Activated T-helper 1 cell treated with anti-CD3 and anti-CD28 coated beads, Interleukin-12 subunit alpha, Interleukin-12 subunit beta, Interleukin-2, Interleukin-4 antibody, amounts not matched to agents 30 ng/mL and 10 ng/mL and 1 ng/mL, durations not matched to agents 14 hours and 24 hours and 36 hours (primary cell): ENCODE measurements at regions of chrX and their contacts with region 1.

Region 1: GRCh38 chrX:52261463-52262194 is 76.9 kb downstream of the MAGED4 start:
- DNase-seq: peak; percentile 78
- H3K4me3 Mint-ChIP-seq: peak overlapping the region; percentile 88
- H3K27ac Mint-ChIP-seq: peak overlapping the region; percentile 99
- H3K4me1 Mint-ChIP-seq: peaks cover 17% of the 10 kb centered on the region
- H3K27me3 Mint-ChIP-seq: peaks cover 3% of the 10 kb centered on the region

Region 2: GRCh38 chrX:51487960-51488267 is 773.7 kb before region 1 on chrX:
- intact Hi-C with region 1: loop called (anchors 5 kb)
- DNase-seq: no peak
- H3K4me3 Mint-ChIP-seq: no peak overlapping the region
- H3K27ac Mint-ChIP-seq: no peak overlapping the region
- H3K4me1 Mint-ChIP-seq: no peaks in the 10 kb centered on the region
- H3K27me3 Mint-ChIP-seq: peaks cover 4% of the 10 kb centered on the region

Region 3: GRCh38 chrX:51614353-51615012 is 647.1 kb before region 1 on chrX:
- intact Hi-C with region 1: loop called (anchors 2 kb)
- DNase-seq: no peak
- H3K4me3 Mint-ChIP-seq: no peak overlapping the region
- H3K27ac Mint-ChIP-seq: no peak overlapping the region
- H3K4me1 Mint-ChIP-seq: no peaks in the 10 kb centered on the region
- H3K27me3 Mint-ChIP-seq: peaks cover 21% of the 10 kb centered on the region

Region 4: DNA sequence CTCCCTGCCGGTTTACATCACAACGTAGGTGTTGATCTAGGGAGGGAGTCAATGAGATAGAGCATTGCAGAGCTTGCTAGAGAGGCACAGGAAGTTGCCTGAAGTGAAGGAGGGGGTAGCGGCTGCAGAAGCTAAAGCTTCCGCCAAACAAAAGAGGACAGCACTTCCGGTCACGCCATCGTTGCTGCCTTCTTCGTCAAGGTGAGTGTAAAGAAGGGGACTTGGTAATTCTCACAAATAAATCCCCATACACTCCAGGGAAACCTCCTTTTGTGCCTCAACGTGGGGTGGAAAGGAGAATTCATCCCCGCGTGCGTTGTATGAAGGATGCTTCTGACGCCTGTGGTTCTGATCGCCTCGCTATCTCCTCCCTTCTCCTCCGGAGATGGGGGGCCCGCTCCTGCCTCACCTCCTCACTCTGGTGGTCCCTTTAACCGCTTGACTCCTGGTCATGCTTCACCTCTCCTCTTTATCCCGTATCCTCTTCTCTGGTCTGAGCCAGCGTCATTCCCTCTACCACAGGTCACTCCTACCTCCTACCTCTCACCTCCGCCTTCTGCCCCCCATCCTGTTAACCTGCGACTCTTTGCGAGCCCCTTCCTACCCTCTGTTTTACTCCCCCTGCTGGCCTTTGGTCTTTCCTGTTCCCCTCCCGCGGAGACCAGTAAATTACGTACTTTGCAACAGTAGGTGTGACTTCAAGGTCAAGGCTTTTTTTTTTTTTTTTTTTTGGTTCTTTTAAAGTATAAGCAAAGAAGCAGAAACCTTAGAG is 458.5 kb before region 1 on chrX:
- intact Hi-C with region 1: loop called (anchors 1 kb)
- DNase-seq: peak; percentile 22
- H3K4me3 Mint-ChIP-seq: peak overlapping the region; percentile 92
- H3K27ac Mint-ChIP-seq: peak overlapping the region; percentile 93
- H3K4me1 Mint-ChIP-seq: peaks cover 4% of the 10 kb centered on the region
- H3K27me3 Mint-ChIP-seq: peaks cover 2% of the 10 kb centered on the region

Region 5: DNA sequence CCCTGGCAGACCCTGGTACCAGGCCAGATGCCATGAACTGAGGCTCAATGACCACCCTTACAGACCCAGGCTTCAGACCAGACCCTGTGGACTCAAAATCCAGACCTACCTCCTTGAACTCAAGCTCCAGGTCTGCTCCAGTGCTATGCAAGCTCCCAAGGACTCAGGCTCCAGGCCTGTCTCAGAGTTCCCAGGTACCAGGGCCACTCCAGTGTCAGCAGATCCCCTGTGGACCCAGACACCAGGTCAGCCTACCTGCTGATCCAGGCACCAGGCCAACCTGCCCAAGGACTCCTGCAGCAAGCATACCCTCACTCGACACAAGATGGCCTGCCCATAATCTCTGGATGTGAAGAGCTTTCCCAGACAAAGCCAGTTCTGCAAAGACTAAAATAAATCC is 121.6 kb before region 1 on chrX:
- intact Hi-C with region 1: no loop called
- DNase-seq: no peak
- H3K4me3 Mint-ChIP-seq: no peak overlapping the region
- H3K27ac Mint-ChIP-seq: no peak overlapping the region
- H3K4me1 Mint-ChIP-seq: no peaks in the 10 kb centered on the region
- H3K27me3 Mint-ChIP-seq: no peaks in the 10 kb centered on the region

Region 6: DNA sequence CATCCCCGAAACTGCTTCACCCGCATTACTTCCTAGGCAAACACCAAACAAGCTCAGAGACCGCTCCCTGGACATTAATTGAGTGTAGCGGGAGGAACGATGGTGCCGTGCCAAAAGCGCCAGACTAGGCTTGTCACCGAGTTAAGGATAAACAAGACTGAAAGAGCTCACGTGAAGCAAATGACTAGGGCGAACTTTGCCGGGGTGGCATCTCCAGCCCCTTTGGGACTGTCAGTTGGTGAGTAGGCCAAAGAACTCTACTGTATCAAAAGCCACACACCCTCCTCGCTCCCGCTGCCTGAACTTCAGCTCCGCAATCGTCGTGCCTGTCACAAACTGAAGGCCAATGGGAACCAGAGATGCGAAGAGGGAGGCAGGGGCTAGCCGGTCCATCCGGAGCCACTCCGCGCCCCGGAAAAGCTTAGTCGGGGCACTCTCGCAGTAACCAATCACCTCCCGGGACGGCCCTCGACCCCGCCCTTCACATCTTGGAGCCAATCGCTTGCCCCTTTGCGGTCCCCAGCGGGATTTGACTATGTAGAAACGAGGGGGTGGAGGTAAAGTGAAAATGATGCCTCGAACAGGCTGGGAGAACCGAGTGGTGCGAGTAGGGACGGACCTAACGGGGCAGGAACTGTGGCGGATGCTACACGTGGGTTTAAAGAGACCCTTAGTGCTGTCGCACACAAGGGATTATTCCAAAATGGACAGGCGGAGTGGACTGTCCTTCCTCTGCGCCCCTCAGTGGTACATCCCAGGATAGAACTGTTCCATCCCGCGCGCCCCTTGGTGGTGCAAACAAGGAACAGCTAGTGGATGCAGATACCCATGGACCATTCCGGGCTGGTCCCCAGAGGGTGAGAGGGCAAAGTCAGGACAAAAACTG is 733.7 kb after region 1 on chrX:
- intact Hi-C with region 1: loop called (anchors 5 kb)
- DNase-seq: peak; percentile 88
- H3K4me3 Mint-ChIP-seq: peak overlapping the region; percentile 89
- H3K27ac Mint-ChIP-seq: peak overlapping the region; percentile 95
- H3K4me1 Mint-ChIP-seq: peaks cover 21% of the 10 kb centered on the region
- H3K27me3 Mint-ChIP-seq: no peaks in the 10 kb centered on the region